ENCODE measurements at regions of chr3 and their contacts with region 1.

Region 1: GRCh38 chr3:182389071-182389815 is 404.1 kb upstream of the ATP11B start:
- DNase-seq: no peak
- H3K4me3 ChIP-seq: no peak overlapping the region
- H3K27ac ChIP-seq: no peak overlapping the region
- H3K4me1 ChIP-seq: peaks cover 39% of the 10 kb centered on the region
- CTCF ChIP-seq: no peak

Region 2: DNA sequence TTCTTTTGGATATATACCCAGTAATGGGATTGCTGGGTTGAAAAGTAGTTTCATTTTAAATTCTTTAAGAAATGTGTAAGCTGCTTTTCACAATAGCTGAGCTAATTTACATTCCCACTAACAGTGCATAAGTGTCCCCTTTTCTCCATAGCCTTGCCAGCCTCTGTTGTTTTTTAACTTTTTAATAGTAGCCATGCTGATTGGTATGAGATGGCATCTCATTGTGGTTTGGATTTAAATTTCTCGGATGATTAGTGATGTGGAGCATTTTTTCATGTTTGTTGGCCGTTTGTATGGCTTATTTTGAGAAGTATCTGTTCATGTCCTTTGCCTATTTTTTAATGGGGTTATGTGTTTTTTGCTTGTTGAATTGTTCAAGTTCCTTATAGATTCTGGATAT is 40.2 kb before region 1 on chr3:
- CTCF ChIA-PET with region 1: no interaction called
- POLR2A ChIA-PET with region 1: interaction called, 15 read pairs
- intact Hi-C with region 1: loop called (anchors 5 kb)
- DNase-seq: peak; percentile 70
- H3K4me3 ChIP-seq: peak overlapping the region; percentile 47
- H3K27ac ChIP-seq: peak overlapping the region; percentile 94
- H3K4me1 ChIP-seq: peaks cover 66% of the 10 kb centered on the region
- CTCF ChIP-seq: no peak

Region 3: GRCh38 chr3:182412065-182412464 is 22.8 kb after region 1 on chr3:
- CTCF ChIA-PET with region 1: no interaction called
- POLR2A ChIA-PET with region 1: interaction called, 24 read pairs
- intact Hi-C with region 1: no loop called
- DNase-seq: peak; percentile 55
- H3K4me3 ChIP-seq: peak overlapping the region; percentile 68
- H3K27ac ChIP-seq: peak overlapping the region; percentile 96
- H3K4me1 ChIP-seq: peaks cover 95% of the 10 kb centered on the region
- CTCF ChIP-seq: no peak

Region 4: DNA sequence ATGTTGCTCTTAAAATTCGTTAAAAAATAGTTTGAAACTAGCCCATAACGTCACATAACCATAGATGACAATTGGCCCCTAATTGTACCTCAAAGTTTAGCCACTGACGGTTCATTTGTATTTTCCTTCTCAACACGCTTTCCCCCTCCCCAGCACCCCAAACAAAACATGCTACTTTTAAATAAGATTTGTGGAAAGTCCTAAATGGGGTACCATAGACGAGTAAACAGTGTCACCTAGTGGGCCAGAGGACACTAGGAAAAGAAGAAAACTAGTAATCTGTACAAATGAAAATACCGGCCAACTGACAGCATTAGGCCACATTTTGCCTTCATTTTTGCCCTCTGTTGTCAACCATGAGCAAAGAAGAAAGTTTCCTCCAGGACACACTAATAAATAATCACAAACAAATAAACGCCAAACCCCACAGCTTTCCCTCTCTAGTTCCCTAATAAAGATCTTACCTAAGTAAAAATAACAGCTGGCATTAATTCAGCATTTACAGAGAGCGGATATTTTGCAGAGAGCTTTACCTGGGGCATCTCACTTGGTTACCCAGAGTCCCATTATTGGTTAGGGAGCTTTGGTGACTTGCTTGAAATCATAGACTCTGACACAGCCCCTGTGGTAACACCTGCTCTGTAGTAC is 229.0 kb after region 1 on chr3:
- CTCF ChIA-PET with region 1: no interaction called
- POLR2A ChIA-PET with region 1: interaction called, 3 read pairs
- intact Hi-C with region 1: loop called (anchors 5 kb)
- DNase-seq: peak; percentile 77
- H3K4me3 ChIP-seq: no peak overlapping the region
- H3K27ac ChIP-seq: no peak overlapping the region
- H3K4me1 ChIP-seq: peaks cover 25% of the 10 kb centered on the region
- CTCF ChIP-seq: peak; percentile 96

Region 5: GRCh38 chr3:182792901-182793662 is 403.8 kb after region 1 on chr3 and contains the start of gene ATP11B:
- CTCF ChIA-PET with region 1: no interaction called
- POLR2A ChIA-PET with region 1: no interaction called
- intact Hi-C with region 1: loop called (anchors 10 kb)
- DNase-seq: peak; percentile 88
- H3K4me3 ChIP-seq: peak within 1 kb of the TSS; percentile 86
- H3K27ac ChIP-seq: peak within 1 kb of the TSS; percentile 72
- H3K4me1 ChIP-seq: peaks cover 37% of the 10 kb centered on the region
- CTCF ChIP-seq: no peak
- total RNA-seq, gene ATP11B: 55.6 and 58.6 TPM in 2 replicates